Cardiac septum (tissue), 1 donor: ENCODE measurements at regions of chr4 and their contacts with region 1.

Region 1: GRCh38 chr4:48963042-48963679 is 22.9 kb upstream of the CWH43 start:
- DNase-seq: no peak

Region 2: GRCh38 chr4:47801481-47802002 is 1161.6 kb before region 1 on chr4:
- intact Hi-C with region 1: no loop called
- DNase-seq: no peak

Region 3: DNA sequence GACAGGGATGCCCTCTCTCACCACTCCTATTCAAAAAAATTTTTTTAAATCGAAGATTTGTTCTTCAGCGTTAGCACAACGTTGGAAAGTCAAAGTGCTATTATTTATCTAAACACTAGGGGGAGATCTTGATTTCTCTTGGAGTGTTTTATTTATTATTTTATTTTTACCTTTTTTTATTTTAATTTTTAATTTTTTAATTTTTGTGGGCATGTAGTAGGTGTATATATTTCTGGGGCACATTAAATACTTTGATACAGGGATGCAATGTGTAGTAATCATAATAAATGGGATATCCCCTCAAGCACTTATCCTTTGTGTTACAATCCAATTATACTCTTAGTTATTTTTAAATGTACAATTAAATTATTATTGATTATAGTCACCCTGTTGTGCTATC is 517.5 kb before region 1 on chr4:
- intact Hi-C with region 1: loop called (anchors 10 kb)
- DNase-seq: no peak

Region 4: DNA sequence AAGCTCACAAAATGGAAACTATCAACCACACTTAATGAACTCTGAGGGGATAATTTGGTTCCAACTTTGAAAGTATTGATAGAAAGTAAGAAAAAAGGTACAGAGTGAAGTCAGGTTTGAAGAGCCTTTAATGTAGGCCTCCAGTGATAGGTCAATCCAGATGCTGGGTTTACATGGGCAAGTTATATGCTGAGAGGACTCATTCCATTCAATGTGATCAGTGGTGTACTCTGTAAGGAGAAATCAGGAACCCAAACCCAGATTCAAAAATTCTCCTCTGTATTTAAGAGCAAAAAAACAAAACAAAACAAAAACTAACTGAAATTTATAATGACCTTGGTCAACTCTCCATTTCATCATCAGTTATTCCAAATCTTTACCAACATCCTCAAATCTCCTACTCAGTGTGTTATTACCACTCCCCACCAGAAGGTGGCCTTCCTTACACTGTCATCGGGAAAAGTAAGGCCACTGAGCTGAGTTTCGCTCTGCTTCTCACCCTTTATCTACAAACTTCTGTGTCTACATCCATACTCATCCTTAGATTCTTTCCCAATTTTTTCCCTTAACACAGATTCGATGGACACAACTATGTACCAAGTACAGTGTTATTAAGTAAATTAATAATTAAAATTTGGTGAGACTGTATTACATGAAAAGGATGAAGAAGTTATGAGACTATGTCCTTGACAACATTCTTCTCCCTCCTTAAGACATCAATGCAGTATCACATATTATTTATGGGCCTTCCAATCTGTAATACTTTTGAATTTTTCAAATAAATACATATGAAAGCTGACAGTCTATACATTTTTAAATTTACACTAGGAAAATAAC is 384.8 kb before region 1 on chr4:
- intact Hi-C with region 1: loop called (anchors 1 kb)
- DNase-seq: no peak

Region 5: GRCh38 chr4:48681856-48682255 is 281.3 kb before region 1 on chr4:
- intact Hi-C with region 1: loop called (anchors 10 kb)
- DNase-seq: no peak

Region 6: GRCh38 chr4:48792348-48793006 is 170.7 kb before region 1 on chr4:
- intact Hi-C with region 1: no loop called
- DNase-seq: no peak

Region 7: DNA sequence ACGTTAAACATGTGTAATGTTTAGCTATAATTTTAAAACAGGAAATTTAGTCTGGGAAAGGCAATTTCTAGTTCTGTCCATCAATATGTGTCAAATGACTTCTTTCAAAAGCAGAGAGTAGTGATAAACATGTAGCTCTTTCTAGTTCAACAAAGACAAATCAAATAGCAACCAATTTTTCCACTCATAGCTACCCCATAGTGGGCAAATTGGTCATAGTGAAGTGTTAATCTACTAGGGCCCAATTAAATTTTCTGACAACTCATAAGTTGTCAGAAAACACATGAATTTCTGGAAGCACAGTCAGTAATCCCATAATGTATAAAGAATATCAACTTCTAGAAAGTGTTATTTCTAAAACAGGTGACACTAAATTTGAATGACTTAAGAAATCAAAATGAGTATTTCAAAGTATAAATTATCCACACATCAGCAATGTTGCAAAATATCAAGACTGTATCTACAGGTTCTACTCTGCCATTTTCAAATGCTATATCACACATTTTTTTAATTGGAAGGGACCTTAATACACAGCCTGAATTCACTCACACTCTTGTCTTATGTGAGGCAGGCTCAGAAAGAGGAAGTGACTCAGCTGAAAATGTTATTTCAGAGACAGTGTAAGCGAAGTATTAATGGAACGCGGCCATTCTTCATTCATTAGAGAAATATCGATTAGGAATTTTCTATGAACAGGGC is 64.3 kb before region 1 on chr4:
- intact Hi-C with region 1: no loop called
- DNase-seq: no peak